Cardiac septum (tissue), 1 donor: ENCODE measurements at regions of chr14 and their contacts with region 1.

Region 1: GRCh38 chr14:59055439-59056045 is 132.9 kb upstream of the DAAM1 start:
- DNase-seq: no peak

Region 2: GRCh38 chr14:58501214-58501816 is 554.2 kb before region 1 on chr14:
- intact Hi-C with region 1: loop called (anchors 2 kb)
- DNase-seq: no peak

Region 3: GRCh38 chr14:58923751-58924405 is 131.7 kb before region 1 on chr14:
- intact Hi-C with region 1: no loop called
- DNase-seq: no peak